Naive thymus-derived CD8-positive, alpha-beta T cell (primary cell): ENCODE measurements at regions of chr19 and their contacts with region 1.

Region 1: GRCh38 chr19:34733826-34734600 is at the start of gene ZNF181:
- DNase-seq: peak; percentile 58 to 89 (median 80)
- ATAC-seq: peak; percentile 84 to 89
- H3K4me3 Mint-ChIP-seq: peak within 1 kb of the TSS; percentile 87 to 99 (median 96)
- H3K27ac Mint-ChIP-seq: peak within 1 kb of the TSS; percentile 89 to 100 (median 98)
- H3K4me1 Mint-ChIP-seq: peaks cover 15 to 34% (median 31%) of the 10 kb centered on the region in 4 donors
- H3K27me3 Mint-ChIP-seq: peaks cover 0 to 4% (median 0%) of the 10 kb centered on the region in 5 donors
- polyA plus RNA-seq, gene ZNF181: 23.1 to 36.4 (median 35.7) TPM

Region 2: DNA sequence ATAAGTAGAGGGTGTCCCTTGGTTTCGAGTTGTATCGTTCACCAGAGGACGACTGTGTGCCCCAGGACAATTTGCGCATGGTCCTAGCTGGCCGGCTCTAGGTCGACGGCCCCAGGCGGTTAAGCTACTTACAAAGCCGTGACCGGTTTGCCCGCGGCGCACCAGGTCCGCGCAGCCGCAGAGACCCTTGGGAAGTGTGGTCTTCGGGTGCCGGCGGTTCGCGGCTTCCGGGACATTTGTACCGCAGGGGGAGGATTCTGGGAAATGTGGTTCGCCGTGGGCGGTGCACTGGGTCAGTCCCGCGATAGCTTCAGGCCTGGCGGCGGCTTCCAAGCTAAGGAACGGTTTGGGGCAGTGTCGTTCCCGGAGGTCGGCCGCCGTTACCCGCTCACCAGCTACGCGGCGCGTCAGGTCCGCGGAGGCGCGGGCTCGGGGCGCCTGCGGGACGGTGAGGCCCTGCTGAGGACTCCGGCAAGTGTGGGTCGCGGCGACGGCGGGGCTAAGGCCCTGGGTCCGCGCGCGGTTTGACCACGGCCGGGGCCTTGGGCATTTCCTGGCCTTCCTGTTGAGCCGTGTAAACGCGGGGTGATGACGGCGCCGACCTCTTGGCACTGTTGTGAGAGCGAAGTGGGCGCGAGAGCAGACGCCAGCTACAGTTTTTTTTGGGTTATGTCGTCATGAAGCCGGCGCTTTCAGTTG is 56.5 kb before region 1 on chr19 and contains the start of gene ZNF302:
- POLR2A ChIA-PET with region 1: interaction called, 20 read pairs
- DNase-seq: peak; percentile 86 to 97 (median 92)
- ATAC-seq: peak; percentile 86 to 91
- H3K4me3 Mint-ChIP-seq: peak within 1 kb of the TSS; percentile 95 to 100 (median 99)
- H3K27ac Mint-ChIP-seq: peak within 1 kb of the TSS; percentile 98 to 100 (median 99)
- H3K4me1 Mint-ChIP-seq: peaks cover 8 to 40% (median 30%) of the 10 kb centered on the region in 4 donors
- H3K27me3 Mint-ChIP-seq: peaks cover 0 to 17% (median 9%) of the 10 kb centered on the region in 5 donors
- polyA plus RNA-seq, gene ZNF302: 17.5 to 23.1 (median 21.7) TPM